Activated CD4-positive, alpha-beta memory T cell treated with anti-CD3 and anti-CD28 coated beads for 36 hours (primary cell): ENCODE measurements at regions of chr1 and their contacts with region 1.

Region 1: DNA sequence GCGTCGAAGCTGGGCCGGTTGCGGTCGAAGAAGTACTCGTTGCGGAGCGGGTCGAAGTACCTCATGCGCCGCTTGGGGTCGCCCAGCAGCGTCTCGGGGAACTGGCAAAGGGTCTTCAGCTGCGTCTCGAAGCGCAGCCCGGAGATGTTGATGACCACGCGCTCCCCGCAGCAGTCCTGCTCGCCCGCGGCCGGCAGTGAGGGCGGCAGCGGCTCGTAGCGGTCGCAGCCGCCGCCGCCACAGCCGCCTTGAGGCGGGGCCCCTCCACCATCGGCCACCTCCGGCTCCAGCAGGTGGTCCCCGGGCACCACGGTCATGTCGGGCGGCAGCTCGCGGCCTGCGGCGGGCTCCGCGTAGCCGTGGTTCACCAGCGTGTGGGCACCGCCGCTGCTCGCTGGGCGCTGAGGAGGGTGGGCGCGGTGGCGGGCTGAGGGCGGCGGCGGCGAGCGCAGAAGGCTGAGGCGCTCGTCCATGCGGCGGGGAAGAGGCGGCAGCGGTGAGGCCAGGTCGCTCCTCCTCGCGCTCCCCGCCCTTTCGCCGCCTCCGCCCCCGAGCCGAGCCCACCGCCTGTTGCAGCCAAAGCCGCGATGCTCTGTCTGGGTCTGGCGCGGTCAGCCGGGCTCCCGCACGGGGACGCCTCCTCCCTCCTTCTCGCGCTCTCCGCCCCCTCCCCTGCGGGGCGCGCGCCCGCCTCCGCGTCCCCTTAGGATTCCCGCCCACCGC is at the start of gene KCNA3:
- DNase-seq: peak; percentile 72
- H3K4me3 Mint-ChIP-seq: peak within 1 kb of the TSS; percentile 95
- H3K27ac Mint-ChIP-seq: peak within 1 kb of the TSS; percentile 97
- H3K4me1 Mint-ChIP-seq: peaks cover 29% of the 10 kb centered on the region
- H3K27me3 Mint-ChIP-seq: no peaks in the 10 kb centered on the region
- total RNA-seq, gene KCNA3: 25.2 to 25.6 TPM

Region 2: GRCh38 chr1:110235834-110236682 is 438.4 kb before region 1 on chr1:
- CTCF ChIA-PET with region 1: no interaction called
- POLR2A ChIA-PET with region 1: no interaction called
- intact Hi-C with region 1: loop called (anchors 1 kb)
- DNase-seq: peak; percentile 86
- H3K4me3 Mint-ChIP-seq: peak overlapping the region; percentile 22
- H3K27ac Mint-ChIP-seq: peak overlapping the region; percentile 97
- H3K4me1 Mint-ChIP-seq: peaks cover 56% of the 10 kb centered on the region
- H3K27me3 Mint-ChIP-seq: no peaks in the 10 kb centered on the region

Region 3: GRCh38 chr1:110630839-110631663 is 43.4 kb before region 1 on chr1:
- CTCF ChIA-PET with region 1: interaction called, 12 read pairs
- POLR2A ChIA-PET with region 1: interaction called, 32 read pairs
- intact Hi-C with region 1: loop called (anchors 1 kb)
- DNase-seq: peak; percentile 92
- H3K4me3 Mint-ChIP-seq: no peak overlapping the region
- H3K27ac Mint-ChIP-seq: no peak overlapping the region
- H3K4me1 Mint-ChIP-seq: peaks cover 66% of the 10 kb centered on the region
- H3K27me3 Mint-ChIP-seq: no peaks in the 10 kb centered on the region

Region 4: DNA sequence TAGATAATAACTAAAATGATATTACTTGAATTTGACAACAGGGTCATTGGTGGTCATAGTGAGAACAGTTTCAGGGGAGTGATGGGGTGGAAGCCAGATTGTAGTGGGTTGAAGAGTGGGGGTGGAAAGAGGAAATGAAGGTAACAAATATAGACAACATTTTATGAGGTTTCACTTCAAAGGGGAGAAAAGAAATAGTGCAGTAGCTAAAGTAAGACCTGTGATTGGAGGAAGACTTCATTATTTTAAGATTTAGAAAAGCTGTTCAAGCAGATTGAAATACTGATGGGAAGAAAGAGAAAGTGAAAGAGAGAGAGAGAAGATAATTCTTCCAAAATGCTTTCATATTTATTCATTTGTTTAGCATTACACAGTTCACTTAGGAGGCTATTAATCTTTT is 52.3 kb after region 1 on chr1:
- CTCF ChIA-PET with region 1: no interaction called
- POLR2A ChIA-PET with region 1: no interaction called
- intact Hi-C with region 1: loop called (anchors 2 kb)
- DNase-seq: no peak
- H3K4me3 Mint-ChIP-seq: peak overlapping the region; percentile 21
- H3K27ac Mint-ChIP-seq: no peak overlapping the region
- H3K4me1 Mint-ChIP-seq: peaks cover 30% of the 10 kb centered on the region
- H3K27me3 Mint-ChIP-seq: no peaks in the 10 kb centered on the region

Region 5: GRCh38 chr1:110879758-110880606 is 205.5 kb after region 1 on chr1:
- CTCF ChIA-PET with region 1: no interaction called
- POLR2A ChIA-PET with region 1: interaction called, 41 read pairs
- intact Hi-C with region 1: loop called (anchors 1 kb)
- DNase-seq: peak; percentile 80
- H3K4me3 Mint-ChIP-seq: peak overlapping the region; percentile 69
- H3K27ac Mint-ChIP-seq: peak overlapping the region; percentile 99
- H3K4me1 Mint-ChIP-seq: peaks cover 62% of the 10 kb centered on the region
- H3K27me3 Mint-ChIP-seq: no peaks in the 10 kb centered on the region

Region 6: GRCh38 chr1:111214074-111214801 is 539.7 kb after region 1 on chr1:
- CTCF ChIA-PET with region 1: no interaction called
- POLR2A ChIA-PET with region 1: no interaction called
- intact Hi-C with region 1: loop called (anchors 1 kb)
- DNase-seq: peak; percentile 45
- H3K4me3 Mint-ChIP-seq: peak overlapping the region; percentile 66
- H3K27ac Mint-ChIP-seq: peak overlapping the region; percentile 95
- H3K4me1 Mint-ChIP-seq: peaks cover 72% of the 10 kb centered on the region
- H3K27me3 Mint-ChIP-seq: peaks cover 3% of the 10 kb centered on the region